T-cell (primary cell): ENCODE measurements at regions of chr3 and their contacts with region 1.

Region 1: DNA sequence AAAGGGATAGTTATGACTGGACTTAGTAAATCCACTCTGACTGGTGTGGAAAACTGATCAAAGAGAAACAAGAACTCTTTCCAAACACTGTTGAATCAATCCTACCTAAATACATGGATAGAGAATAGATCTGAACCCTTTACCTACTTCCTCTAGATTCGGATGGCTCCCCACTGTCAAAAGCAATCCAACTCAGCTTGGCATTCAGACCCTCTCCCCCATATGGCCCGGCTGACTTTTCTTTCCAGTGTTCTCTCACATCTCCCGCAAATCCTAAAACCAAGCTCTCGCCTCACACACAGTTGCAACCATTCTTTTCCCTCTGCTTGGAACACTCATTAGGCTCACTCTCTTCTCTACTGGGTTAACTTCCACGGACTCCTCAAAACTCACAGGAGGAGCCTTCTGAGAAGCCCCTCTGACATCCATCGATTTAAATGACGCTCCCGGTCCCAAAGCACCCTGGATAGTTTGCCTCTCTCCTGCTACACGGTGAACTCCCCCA is 639 bp downstream of the SPICE1 start:
- DNase-seq: no peak
- ATAC-seq: peak in 1 of 4 experiments; percentile 4
- H3K4me3 ChIP-seq: peak overlapping the region; percentile 91 to 94
- H3K4me3 Mint-ChIP-seq: no peak overlapping the region
- H3K27ac ChIP-seq: peak overlapping the region; percentile 87
- H3K27ac Mint-ChIP-seq: no peak overlapping the region
- H3K4me1 ChIP-seq: peaks cover 13 to 15% of the 10 kb centered on the region in 2 experiments
- H3K4me1 Mint-ChIP-seq: peaks cover 19 to 23% (median 21%) of the 10 kb centered on the region in 3 donors
- H3K27me3 ChIP-seq: peaks cover 0 to 4% of the 10 kb centered on the region in 2 experiments
- H3K27me3 Mint-ChIP-seq: peaks cover 7 to 22% of the 10 kb centered on the region in 2 donors

Region 2: GRCh38 chr3:113441051-113441770 is 73.1 kb before region 1 on chr3 and contains the start of gene CFAP44:
- CTCF ChIA-PET with region 1: no interaction called
- POLR2A ChIA-PET with region 1: no interaction called
- DNase-seq: peak; percentile 6 to 67 (median 42)
- ATAC-seq: peak; percentile 48 to 75 (median 56)
- H3K4me3 ChIP-seq: peak within 1 kb of the TSS in 1 of 2 donors; percentile 47
- H3K4me3 Mint-ChIP-seq: peak within 1 kb of the TSS; percentile 13 to 49 (median 32)
- H3K27ac ChIP-seq: no peak within 1 kb of the TSS
- H3K27ac Mint-ChIP-seq: no peak within 1 kb of the TSS
- H3K4me1 ChIP-seq: peaks cover 0 to 3% of the 10 kb centered on the region in 2 experiments
- H3K4me1 Mint-ChIP-seq: peaks cover 0 to 2% (median 2%) of the 10 kb centered on the region in 3 donors
- H3K27me3 ChIP-seq: no peaks in the 10 kb centered on the region
- H3K27me3 Mint-ChIP-seq: no peaks in the 10 kb centered on the region
- total RNA-seq, gene CFAP44: 12.2 to 19.9 (median 16.0) TPM

Region 3: DNA sequence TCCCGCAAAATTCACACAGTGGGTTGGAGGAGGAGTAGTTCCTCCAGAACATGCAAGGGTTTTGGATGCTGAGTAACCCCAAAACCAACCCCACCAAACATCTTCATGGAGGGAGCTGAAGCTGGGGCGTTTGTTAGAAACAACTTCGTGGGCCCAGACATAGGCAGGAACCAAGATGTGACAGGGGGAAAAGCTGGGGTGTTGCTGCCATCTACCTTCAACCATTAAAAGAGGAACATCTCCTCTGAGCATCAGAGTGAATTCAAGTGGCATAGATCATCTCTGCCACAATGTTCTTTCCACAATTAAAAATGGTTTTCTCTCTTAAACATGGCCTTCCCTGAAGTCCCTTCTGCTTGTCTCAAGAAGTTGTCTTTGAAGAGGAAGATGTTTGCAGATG is 38.5 kb after region 1 on chr3:
- CTCF ChIA-PET with region 1: interaction called, 3 to 11 read pairs
- POLR2A ChIA-PET with region 1: interaction called, 4 to 9 read pairs
- DNase-seq: peak in 29 of 35 experiments; percentile 6 to 64 (median 31)
- ATAC-seq: peak; percentile 67 to 93 (median 72)
- H3K4me3 ChIP-seq: no peak overlapping the region
- H3K4me3 Mint-ChIP-seq: no peak overlapping the region
- H3K27ac ChIP-seq: no peak overlapping the region
- H3K27ac Mint-ChIP-seq: no peak overlapping the region
- H3K4me1 ChIP-seq: peaks cover 0 to 7% of the 10 kb centered on the region in 2 experiments
- H3K4me1 Mint-ChIP-seq: peaks cover 41 to 60% (median 55%) of the 10 kb centered on the region in 3 donors
- H3K27me3 ChIP-seq: no peaks in the 10 kb centered on the region
- H3K27me3 Mint-ChIP-seq: no peaks in the 10 kb centered on the region